A549 (cell line): ENCODE measurements at regions of chr7 and their contacts with region 1.

Region 1: DNA sequence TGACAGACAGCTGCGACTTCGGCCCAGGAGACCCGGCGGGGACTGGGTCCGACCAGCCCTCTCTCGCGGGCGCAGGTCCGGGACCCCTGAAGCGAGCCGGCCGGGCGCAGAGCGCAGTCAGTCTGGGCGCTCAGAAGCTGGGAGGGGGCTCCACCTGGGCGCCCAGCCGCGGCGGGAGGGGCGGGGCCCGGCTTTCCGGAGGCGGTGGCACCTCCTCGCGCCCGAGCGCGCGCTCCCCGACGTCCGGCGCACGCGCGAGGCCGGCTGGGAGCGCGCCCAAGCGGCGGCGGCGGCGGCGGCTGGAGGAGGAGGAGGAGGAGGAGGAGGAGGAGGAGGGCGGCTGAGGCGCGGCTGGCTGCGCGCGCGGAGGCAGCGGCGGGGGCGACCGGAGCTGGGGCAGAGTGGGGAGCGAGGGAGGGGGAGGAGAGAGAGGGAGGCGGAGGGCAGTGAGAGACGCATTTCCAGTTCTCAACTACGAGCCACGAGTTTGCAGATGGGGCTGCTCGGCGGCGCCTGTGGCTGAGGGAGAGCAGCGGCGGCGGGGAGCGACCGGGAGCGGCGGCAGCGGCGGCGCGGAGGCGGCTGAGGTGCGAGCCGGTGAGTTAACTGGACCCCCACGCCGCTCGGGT is at the start of gene PALS2:
- DNase-seq: peak; percentile 60 to 77
- ATAC-seq: peak; percentile 69 to 73
- H3K4me3 ChIP-seq: peak within 1 kb of the TSS; percentile 65
- H3K27ac ChIP-seq: peak within 1 kb of the TSS; percentile 86 to 95
- H3K4me1 ChIP-seq: peaks cover 24% of the 10 kb centered on the region
- CTCF ChIP-seq: no peak
- EP300 ChIP-seq: no peak
- POLR2A ChIP-seq: peak; percentile 65
- RAD21 ChIP-seq: no peak; a peak in 1 of 5 replicates
- polyA plus RNA-seq, gene PALS2: 12.5 and 17.8 TPM in 2 replicates

Region 2: DNA sequence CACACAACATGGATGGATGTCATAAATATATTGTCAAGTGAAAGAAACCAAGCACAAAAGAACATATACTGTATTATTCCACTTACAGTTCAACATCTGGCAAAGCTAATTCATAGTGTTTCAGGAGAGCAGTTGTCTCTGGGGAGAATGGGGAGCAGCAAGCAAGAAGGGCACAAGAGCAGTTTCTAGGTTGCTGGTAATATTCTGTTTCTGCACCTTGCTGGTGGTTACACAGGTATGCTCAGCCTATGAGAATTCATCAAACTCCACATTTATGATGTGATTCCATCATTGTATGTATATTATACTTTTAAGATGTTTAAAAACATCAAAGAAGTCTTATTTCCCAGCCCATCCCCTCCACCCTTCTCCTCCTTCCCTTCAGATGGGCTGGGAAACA is 17.9 kb before region 1 on chr7:
- CTCF ChIA-PET with region 1: no interaction called
- POLR2A ChIA-PET with region 1: no interaction called
- DNase-seq: no peak
- ATAC-seq: no peak
- H3K4me3 ChIP-seq: no peak overlapping the region
- H3K27ac ChIP-seq: no peak overlapping the region
- H3K4me1 ChIP-seq: no peaks in the 10 kb centered on the region
- CTCF ChIP-seq: no peak
- EP300 ChIP-seq: no peak
- POLR2A ChIP-seq: no peak
- RAD21 ChIP-seq: no peak

Region 3: GRCh38 chr7:24587848-24588247 is 14.7 kb after region 1 on chr7:
- CTCF ChIA-PET with region 1: interaction called, 14 read pairs
- POLR2A ChIA-PET with region 1: no interaction called
- DNase-seq: peak in 1 of 2 experiments; percentile 34
- ATAC-seq: peak; percentile 70 to 76; a peak in 5 of 6 replicates
- H3K4me3 ChIP-seq: no peak overlapping the region
- H3K27ac ChIP-seq: no peak overlapping the region
- H3K4me1 ChIP-seq: no peaks in the 10 kb centered on the region
- CTCF ChIP-seq: peak; percentile 48
- EP300 ChIP-seq: no peak
- POLR2A ChIP-seq: no peak
- RAD21 ChIP-seq: peak; percentile 58 to 59